Pancreas (tissue), 10 donors: ENCODE measurements at regions of chr1 and their contacts with region 1.

Region 1: DNA sequence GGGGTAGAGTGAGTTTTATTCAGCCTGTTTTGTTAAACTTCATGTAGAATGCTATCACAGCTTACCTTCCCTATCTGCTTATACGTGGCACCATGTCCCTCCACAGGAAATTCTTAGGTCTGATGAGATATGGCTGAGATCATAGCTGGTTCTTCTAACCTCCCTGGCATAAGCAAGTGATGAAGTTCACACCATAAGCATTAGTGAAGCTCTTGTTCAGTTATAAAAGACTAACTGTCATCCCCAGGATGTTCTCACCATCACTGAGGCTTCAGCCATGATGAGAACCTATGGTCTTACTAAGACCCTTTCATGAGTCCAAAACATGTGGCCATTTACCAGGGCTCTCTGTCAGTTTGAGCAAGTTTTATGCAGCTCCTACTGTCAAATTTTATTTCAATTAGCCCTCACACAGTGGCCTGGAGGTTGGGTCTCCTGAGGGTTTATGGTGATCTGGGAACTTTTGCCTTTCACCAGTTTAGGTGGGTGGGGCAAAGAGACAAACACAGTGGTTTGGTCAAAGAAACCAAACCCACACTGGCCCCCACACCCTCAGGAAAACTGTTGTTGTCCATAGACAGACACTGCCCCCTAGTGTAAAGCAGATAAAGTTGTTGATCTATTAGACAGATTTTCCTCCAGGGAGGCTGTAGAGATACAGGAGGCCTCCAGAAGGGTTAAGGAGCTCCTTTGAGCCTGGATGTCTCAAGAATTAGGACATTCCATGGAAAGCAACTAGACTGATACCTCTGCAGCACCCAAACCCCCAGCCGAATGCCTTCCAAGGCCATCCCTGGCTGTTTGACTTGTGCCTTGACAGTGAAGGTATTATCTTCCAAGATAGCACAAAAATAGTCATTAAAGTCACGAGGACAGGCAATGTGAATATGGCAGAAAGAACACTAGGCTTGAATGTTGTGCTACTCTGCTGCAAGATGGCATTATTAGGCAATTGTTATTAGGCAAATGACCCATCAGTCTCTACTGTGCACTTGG is 5.0 kb downstream of the SLC22A15 start:
- DNase-seq: peak in 1 of 6 donors; percentile 37
- ATAC-seq: peak; percentile 26 to 78 (median 58)
- H3K4me3 ChIP-seq: no peak overlapping the region
- H3K27ac ChIP-seq: no peak overlapping the region
- H3K4me1 ChIP-seq: no peaks in the 10 kb centered on the region
- H3K27me3 ChIP-seq: no peaks in the 10 kb centered on the region
- CTCF ChIP-seq: peak; percentile 44 to 61 (median 48)

Region 2: GRCh38 chr1:115807723-115808122 is 173.6 kb before region 1 on chr1:
- intact Hi-C with region 1: loop called in 2 of 3 experiments (anchors 5 to 10 kb)
- DNase-seq: peak in 3 of 6 donors; percentile 56 to 69 (median 67)
- ATAC-seq: peak; percentile 47 to 83 (median 72)
- H3K4me3 ChIP-seq: no peak overlapping the region
- H3K27ac ChIP-seq: no peak overlapping the region
- H3K4me1 ChIP-seq: peaks cover 5 to 13% (median 13%) of the 10 kb centered on the region in 3 donors
- H3K27me3 ChIP-seq: no peaks in the 10 kb centered on the region
- CTCF ChIP-seq: peak; percentile 49 to 74 (median 64)

Region 3: DNA sequence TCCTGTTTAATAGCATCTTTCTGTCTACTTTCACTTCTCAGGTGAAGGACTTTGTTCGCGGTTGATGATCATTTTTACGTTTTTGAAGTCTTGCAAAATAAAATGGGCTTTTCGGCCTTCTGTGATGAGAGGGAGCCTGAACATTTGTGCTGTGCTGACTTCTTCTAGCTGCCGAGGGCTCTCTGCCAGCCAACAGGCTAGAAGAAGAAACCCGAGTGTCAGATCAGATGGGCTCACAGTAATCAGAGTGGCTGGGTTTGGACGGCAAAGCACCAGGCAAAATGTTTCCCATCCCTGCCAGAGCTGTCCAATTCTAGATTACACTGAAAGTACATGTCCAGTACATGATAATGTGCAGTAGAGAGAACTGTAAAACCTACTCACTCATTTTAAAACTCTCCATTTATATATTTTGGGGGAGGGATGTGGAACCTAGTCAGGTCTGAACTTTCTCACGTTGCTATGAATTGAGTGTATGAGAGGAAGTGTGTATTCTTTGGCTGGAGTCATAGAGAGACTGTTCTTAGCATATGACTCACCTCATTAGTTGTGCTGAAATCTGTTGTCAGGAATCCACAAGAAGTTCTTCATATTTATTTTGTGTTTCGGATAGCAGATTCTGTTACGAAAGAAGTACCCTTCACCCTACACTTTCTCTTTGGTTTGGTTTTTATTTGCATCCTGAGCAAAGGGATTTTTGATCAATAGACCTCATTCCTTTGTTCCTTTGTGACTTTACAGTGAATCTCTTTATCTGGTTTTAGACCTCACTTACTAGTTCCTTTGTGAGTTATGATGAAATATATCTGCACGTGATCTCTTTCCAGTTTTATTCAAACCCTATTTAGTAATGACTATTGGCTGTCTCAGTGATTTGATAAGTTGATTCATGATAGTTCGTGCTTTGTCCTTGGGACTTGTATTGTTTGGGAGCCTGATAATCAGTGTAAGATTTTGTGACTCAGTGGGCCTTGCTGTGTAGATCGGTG is 396.5 kb after region 1 on chr1:
- intact Hi-C with region 1: no loop called
- DNase-seq: peak in 2 of 6 donors; percentile 44 to 48
- ATAC-seq: peak; percentile 24 to 63 (median 30)
- H3K4me3 ChIP-seq: peak overlapping the region in 3 of 4 donors; percentile 17 to 92 (median 90)
- H3K27ac ChIP-seq: peak overlapping the region; percentile 45 to 96 (median 78)
- H3K4me1 ChIP-seq: peaks cover 37 to 75% (median 67%) of the 10 kb centered on the region in 3 donors
- H3K27me3 ChIP-seq: no peaks in the 10 kb centered on the region
- CTCF ChIP-seq: no peak